ENCODE measurements at regions of chr20 and their contacts with region 1.

Region 1: DNA sequence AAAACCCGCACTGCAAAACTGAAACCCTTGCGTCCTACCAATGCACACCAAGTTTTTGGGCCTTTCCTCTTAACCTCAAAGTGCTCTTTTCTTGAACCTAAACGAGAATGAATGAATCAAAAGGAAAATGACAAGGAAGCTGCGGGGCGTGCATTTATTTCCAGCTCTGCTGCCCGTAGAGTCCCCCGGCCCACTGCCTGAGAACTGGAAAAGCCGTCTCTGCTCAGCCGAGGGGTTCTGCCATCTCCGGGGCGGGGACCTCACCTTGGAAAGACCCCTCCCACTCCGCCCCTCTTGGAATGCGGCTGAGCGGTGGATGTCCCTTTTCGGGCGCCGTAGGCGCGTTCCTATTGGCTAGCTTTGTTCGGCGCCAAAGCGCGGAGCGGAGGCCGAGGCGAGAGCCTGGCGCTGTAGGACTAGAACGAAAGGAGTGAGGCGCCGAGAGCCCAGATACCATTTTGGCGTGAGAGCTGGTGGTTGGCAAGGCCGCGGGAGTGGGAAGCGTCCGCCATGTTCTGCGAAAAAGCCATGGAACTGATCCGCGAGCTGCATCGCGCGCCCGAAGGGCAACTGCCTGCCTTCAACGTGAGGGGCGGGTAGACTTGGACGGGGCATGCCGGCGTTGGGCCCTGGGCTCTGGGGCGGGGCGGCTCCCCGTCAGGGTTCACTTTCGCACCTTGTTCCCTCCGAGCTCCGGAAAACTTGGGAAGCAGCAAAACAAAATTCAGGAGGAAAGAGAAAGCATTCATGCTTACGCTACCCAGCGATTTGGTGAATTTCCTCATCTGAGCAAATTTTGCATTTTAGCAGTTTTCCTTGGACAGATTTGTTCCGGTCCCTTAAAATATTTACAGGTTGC is at the start of gene GINS1:
- DNase-seq: peak; percentile 85
- H3K4me3 Mint-ChIP-seq: peak within 1 kb of the TSS; percentile 86
- H3K27ac Mint-ChIP-seq: peak within 1 kb of the TSS; percentile 87
- H3K4me1 Mint-ChIP-seq: peaks cover 27% of the 10 kb centered on the region
- H3K27me3 Mint-ChIP-seq: no peaks in the 10 kb centered on the region
- total RNA-seq, gene GINS1: 39.6 and 40.1 TPM in 2 replicates

Region 2: GRCh38 chr20:23420943-23421931 is 1986.3 kb before region 1 on chr20 and contains the start of gene NAPB:
- intact Hi-C with region 1: loop called (anchors 5 kb)
- DNase-seq: peak; percentile 92
- H3K4me3 Mint-ChIP-seq: peak within 1 kb of the TSS; percentile 97
- H3K27ac Mint-ChIP-seq: peak within 1 kb of the TSS; percentile 81
- H3K4me1 Mint-ChIP-seq: peaks cover 49% of the 10 kb centered on the region
- H3K27me3 Mint-ChIP-seq: no peaks in the 10 kb centered on the region
- total RNA-seq, gene NAPB: 14.0 and 15.5 TPM in 2 replicates

Region 3: GRCh38 chr20:25057234-25058050 is 350.1 kb before region 1 on chr20:
- intact Hi-C with region 1: loop called (anchors 1 kb)
- DNase-seq: peak; percentile 83
- H3K4me3 Mint-ChIP-seq: peak overlapping the region; percentile 78
- H3K27ac Mint-ChIP-seq: peak overlapping the region; percentile 84
- H3K4me1 Mint-ChIP-seq: peaks cover 33% of the 10 kb centered on the region
- H3K27me3 Mint-ChIP-seq: peaks cover 47% of the 10 kb centered on the region

Region 4: GRCh38 chr20:25247956-25248785 is 159.4 kb before region 1 on chr20 and contains the start of gene PYGB:
- intact Hi-C with region 1: loop called (anchors 1 kb)
- DNase-seq: peak; percentile 69
- H3K4me3 Mint-ChIP-seq: peak within 1 kb of the TSS; percentile 92
- H3K27ac Mint-ChIP-seq: peak within 1 kb of the TSS; percentile 87
- H3K4me1 Mint-ChIP-seq: peaks cover 43% of the 10 kb centered on the region
- H3K27me3 Mint-ChIP-seq: no peaks in the 10 kb centered on the region
- total RNA-seq, gene PYGB: 36.8 and 38.5 TPM in 2 replicates

Region 5: GRCh38 chr20:25390538-25391528 is 16.7 kb before region 1 on chr20 and contains the start of gene ABHD12:
- intact Hi-C with region 1: loop called (anchors 1 kb)
- DNase-seq: peak; percentile 93
- H3K4me3 Mint-ChIP-seq: peak within 1 kb of the TSS; percentile 90
- H3K27ac Mint-ChIP-seq: peak within 1 kb of the TSS; percentile 88
- H3K4me1 Mint-ChIP-seq: peaks cover 18% of the 10 kb centered on the region
- H3K27me3 Mint-ChIP-seq: peaks cover 6% of the 10 kb centered on the region
- total RNA-seq, gene ABHD12: 37.0 and 37.6 TPM in 2 replicates

Region 6: GRCh38 chr20:25623736-25624499 is 216.4 kb after region 1 on chr20 and contains the start of gene NANP:
- intact Hi-C with region 1: loop called (anchors 1 kb)
- DNase-seq: peak; percentile 85
- H3K4me3 Mint-ChIP-seq: peak within 1 kb of the TSS; percentile 91
- H3K27ac Mint-ChIP-seq: peak within 1 kb of the TSS; percentile 98
- H3K4me1 Mint-ChIP-seq: peaks cover 39% of the 10 kb centered on the region
- H3K27me3 Mint-ChIP-seq: peaks cover 4% of the 10 kb centered on the region
- total RNA-seq, gene NANP: 9.1 and 9.8 TPM in 2 replicates

Measured in activated T-helper 1 cell treated with anti-CD3 and anti-CD28 coated beads, Interleukin-12 subunit alpha, Interleukin-12 subunit beta, Interleukin-2, Interleukin-4 antibody, amounts not matched to agents 30 ng/mL and 10 ng/mL and 1 ng/mL, durations not matched to agents 14 hours and 24 hours and 36 hours (primary cell).